ENCODE measurements at regions of chr22 and their contacts with region 1.

Region 1: GRCh38 chr22:37457093-37457893 is 28.9 kb downstream of the MFNG start:
- DNase-seq: peak; percentile 56 to 97
- H3K4me3 ChIP-seq: no peak overlapping the region
- H3K27ac ChIP-seq: no peak overlapping the region
- H3K4me1 ChIP-seq: no peaks in the 10 kb centered on the region; a peak in 2 of 7 replicates
- H3K27me3 ChIP-seq: no peaks in the 10 kb centered on the region
- CTCF ChIP-seq: peak; percentile 97 to 99 (median 99)
- EP300 ChIP-seq: no peak
- POLR2A ChIP-seq: no peak
- RAD21 ChIP-seq: peak; percentile 98 to 100

Region 2: GRCh38 chr22:37309211-37310074 is 147.8 kb before region 1 on chr22:
- CTCF ChIA-PET with region 1: interaction called, 119 read pairs
- POLR2A ChIA-PET with region 1: no interaction called
- DNase-seq: no peak
- H3K4me3 ChIP-seq: no peak overlapping the region
- H3K27ac ChIP-seq: no peak overlapping the region
- H3K4me1 ChIP-seq: peaks cover 6 to 21% (median 14%) of the 10 kb centered on the region in 4 experiments
- H3K27me3 ChIP-seq: no peaks in the 10 kb centered on the region; a peak in 2 of 7 replicates
- CTCF ChIP-seq: no peak
- EP300 ChIP-seq: no peak
- POLR2A ChIP-seq: no peak
- RAD21 ChIP-seq: no peak

Region 3: GRCh38 chr22:37330200-37331033 is 126.9 kb before region 1 on chr22:
- CTCF ChIA-PET with region 1: interaction called, 10 read pairs
- POLR2A ChIA-PET with region 1: no interaction called
- DNase-seq: peak; percentile 69 to 91
- H3K4me3 ChIP-seq: no peak overlapping the region
- H3K27ac ChIP-seq: no peak overlapping the region
- H3K4me1 ChIP-seq: peaks cover 0 to 15% (median 4%) of the 10 kb centered on the region in 4 experiments; a peak in 5 of 7 replicates
- H3K27me3 ChIP-seq: peaks cover 0 to 27% (median 12%) of the 10 kb centered on the region in 4 experiments; a peak in 5 of 7 replicates
- CTCF ChIP-seq: peak; percentile 44 to 81 (median 73)
- EP300 ChIP-seq: no peak
- POLR2A ChIP-seq: no peak
- RAD21 ChIP-seq: peak; percentile 13 to 21; a peak in 1 of 4 replicates

Region 4: GRCh38 chr22:37442537-37442936 is 14.8 kb before region 1 on chr22:
- CTCF ChIA-PET with region 1: interaction called, 15 read pairs
- POLR2A ChIA-PET with region 1: no interaction called
- DNase-seq: no peak
- H3K4me3 ChIP-seq: no peak overlapping the region
- H3K27ac ChIP-seq: no peak overlapping the region
- H3K4me1 ChIP-seq: no peaks in the 10 kb centered on the region
- H3K27me3 ChIP-seq: no peaks in the 10 kb centered on the region; a peak in 1 of 7 replicates
- CTCF ChIP-seq: no peak
- EP300 ChIP-seq: no peak
- POLR2A ChIP-seq: no peak
- RAD21 ChIP-seq: no peak

Region 5: GRCh38 chr22:37492428-37493344 is 35.4 kb after region 1 on chr22:
- CTCF ChIA-PET with region 1: interaction called, 20 read pairs
- POLR2A ChIA-PET with region 1: no interaction called
- DNase-seq: peak; percentile 46 to 84
- H3K4me3 ChIP-seq: no peak overlapping the region
- H3K27ac ChIP-seq: no peak overlapping the region
- H3K4me1 ChIP-seq: peaks cover 0 to 13% (median 9%) of the 10 kb centered on the region in 4 experiments; a peak in 6 of 7 replicates
- H3K27me3 ChIP-seq: no peaks in the 10 kb centered on the region
- CTCF ChIP-seq: peak; percentile 68 to 90 (median 76)
- EP300 ChIP-seq: no peak
- POLR2A ChIP-seq: no peak
- RAD21 ChIP-seq: peak; percentile 43 to 63